Motor neuron (in vitro differentiated cells): ENCODE measurements at regions of chr10 and their contacts with region 1.

Region 1: GRCh38 chr10:60208676-60209269 is 180.9 kb downstream of the ANK3 start:
- ATAC-seq: peak in 4 of 8 experiments; percentile 20 to 44 (median 32)
- H3K4me3 ChIP-seq: no peak overlapping the region
- H3K27ac ChIP-seq: no peak overlapping the region
- H3K4me1 ChIP-seq: no peaks in the 10 kb centered on the region

Region 2: GRCh38 chr10:60099998-60100747 is 108.6 kb before region 1 on chr10:
- in situ Hi-C with region 1: loop called in 3 of 9 experiments (anchors 10 to 25 kb)
- ATAC-seq: peak in 4 of 8 experiments; percentile 48 to 81 (median 78)
- H3K4me3 ChIP-seq: no peak overlapping the region
- H3K27ac ChIP-seq: no peak overlapping the region
- H3K4me1 ChIP-seq: peaks cover 0 to 6% of the 10 kb centered on the region in 2 donors

Region 3: DNA sequence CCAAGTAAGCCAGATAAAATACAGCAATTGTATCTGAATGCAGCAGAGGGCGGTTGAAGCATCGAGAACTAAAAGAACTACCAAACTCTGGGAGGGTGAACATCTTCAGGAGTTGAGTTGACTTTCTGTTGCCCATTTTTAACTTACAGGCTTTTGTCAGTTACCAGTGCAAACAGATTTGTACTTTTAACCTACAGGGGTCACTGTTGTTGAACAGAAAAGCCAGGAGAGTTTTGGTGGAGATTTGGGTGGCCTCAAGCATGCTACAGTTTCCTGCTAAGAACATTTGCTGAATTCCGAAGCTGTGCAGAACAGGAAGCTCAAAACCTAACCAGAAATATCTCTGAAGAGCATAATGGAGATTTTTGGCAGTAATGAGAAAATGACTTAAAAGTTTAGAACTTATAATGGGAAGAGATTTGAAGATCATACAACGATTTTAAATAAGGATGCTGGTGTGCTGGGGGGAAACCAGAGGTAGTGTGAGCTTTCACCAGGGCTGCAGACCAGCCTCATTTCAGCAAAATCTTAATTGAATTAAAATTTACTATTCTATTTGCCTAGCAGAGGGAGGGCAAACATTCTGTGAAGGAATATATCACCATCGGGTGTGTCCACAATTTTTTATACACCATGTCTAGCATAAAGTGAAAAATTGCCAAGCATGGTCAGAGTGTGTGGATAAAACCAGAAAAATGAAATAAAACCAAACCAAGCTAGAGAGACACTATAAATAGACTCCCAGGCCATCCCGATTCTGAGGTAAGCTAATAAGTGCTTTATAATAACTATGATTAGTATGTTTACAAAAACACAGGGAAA is 93.8 kb before region 1 on chr10:
- in situ Hi-C with region 1: loop called in 2 of 9 experiments (anchors 10 to 25 kb)
- ATAC-seq: peak in 3 of 8 experiments; percentile 62 to 91 (median 86)
- H3K4me3 ChIP-seq: no peak overlapping the region
- H3K27ac ChIP-seq: no peak overlapping the region
- H3K4me1 ChIP-seq: no peaks in the 10 kb centered on the region

Region 4: DNA sequence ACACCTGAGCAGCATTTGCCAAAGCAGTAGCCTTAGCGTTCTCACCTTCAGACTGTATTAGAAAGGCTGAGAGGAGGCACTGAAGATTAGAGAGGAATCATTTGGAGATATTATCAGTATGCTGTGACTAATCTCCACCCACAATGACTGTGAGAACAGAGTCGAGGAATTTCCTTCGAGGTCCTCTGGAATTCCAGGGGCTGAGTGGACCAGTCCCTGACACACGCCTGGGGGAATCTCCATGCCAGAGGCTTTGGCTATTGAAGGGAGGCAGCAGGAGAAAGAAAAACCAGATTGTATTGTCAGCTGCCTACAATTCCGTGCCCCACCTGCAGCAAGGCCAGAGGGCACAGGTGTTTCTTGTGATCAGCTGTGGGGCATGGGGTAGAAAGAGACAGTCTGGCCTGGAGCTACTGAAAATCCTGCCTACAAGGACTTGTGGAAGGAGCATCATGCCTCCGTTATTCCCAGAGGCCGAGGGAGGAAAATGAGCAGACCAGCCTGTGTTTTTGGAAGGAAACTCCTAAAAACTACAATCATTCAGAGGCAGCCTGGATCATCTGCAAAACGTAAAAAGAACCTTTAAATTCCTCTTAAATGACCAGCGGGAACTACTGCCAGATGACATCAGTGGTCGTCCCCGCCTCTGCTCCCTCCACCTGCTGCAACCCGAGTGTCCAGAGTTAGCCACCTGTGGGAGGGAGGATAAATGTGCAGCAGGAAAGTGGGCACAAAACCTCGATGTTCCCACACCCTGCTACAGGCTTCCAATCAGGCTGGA is 206.2 kb after region 1 on chr10:
- in situ Hi-C with region 1: loop called in 1 of 9 experiments (anchors 25 kb)
- ATAC-seq: peak in 3 of 8 experiments; percentile 39 to 90 (median 65)
- H3K4me3 ChIP-seq: no peak overlapping the region
- H3K27ac ChIP-seq: no peak overlapping the region
- H3K4me1 ChIP-seq: peaks cover 0 to 9% of the 10 kb centered on the region in 2 donors

Region 5: DNA sequence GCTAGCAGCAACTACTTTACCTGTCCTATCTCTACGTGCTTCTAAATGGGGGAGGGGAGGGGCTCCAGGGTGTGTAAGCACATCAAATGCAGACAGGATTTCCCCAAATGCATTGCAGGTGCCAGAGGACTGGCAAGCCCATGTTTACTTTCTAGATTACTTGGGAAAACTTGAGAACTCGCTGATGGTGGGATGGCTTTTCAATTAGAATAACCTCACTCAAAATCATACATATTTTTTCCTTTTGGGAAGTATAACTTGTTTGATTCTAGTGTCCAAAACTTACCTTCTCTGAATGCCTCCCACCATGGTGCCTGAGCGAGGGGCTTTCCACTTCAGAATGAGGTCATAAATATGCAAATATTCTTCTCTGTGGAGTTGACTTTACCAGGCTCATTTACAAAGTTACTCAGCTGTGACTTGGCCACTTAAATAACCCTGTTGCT is 926.5 kb after region 1 on chr10:
- in situ Hi-C with region 1: no loop called
- ATAC-seq: peak in 3 of 8 experiments; percentile 27 to 58 (median 57)
- H3K4me3 ChIP-seq: no peak overlapping the region
- H3K27ac ChIP-seq: no peak overlapping the region
- H3K4me1 ChIP-seq: peaks cover 5 to 9% of the 10 kb centered on the region in 2 donors